Adrenal gland (tissue), 19 donors: ENCODE measurements at regions of chr22 and their contacts with region 1.

Region 1: GRCh38 chr22:42511401-42511891 is 8.2 kb downstream of the RRP7A start:
- DNase-seq: no peak
- H3K4me3 ChIP-seq: no peak overlapping the region
- H3K27ac ChIP-seq: no peak overlapping the region
- H3K4me1 ChIP-seq: peaks cover 0 to 6% of the 10 kb centered on the region in 2 donors
- H3K27me3 ChIP-seq: no peaks in the 10 kb centered on the region
- CTCF ChIP-seq: no peak
- POLR2A ChIP-seq: no peak

Region 2: GRCh38 chr22:42544686-42545085 is 33.2 kb after region 1 on chr22:
- intact Hi-C with region 1: loop called in 1 of 2 experiments (anchors 5 kb)
- DNase-seq: peak in 2 of 7 donors; percentile 31 to 47
- H3K4me3 ChIP-seq: no peak overlapping the region
- H3K27ac ChIP-seq: no peak overlapping the region
- H3K4me1 ChIP-seq: no peaks in the 10 kb centered on the region
- H3K27me3 ChIP-seq: no peaks in the 10 kb centered on the region
- CTCF ChIP-seq: no peak
- POLR2A ChIP-seq: no peak

Region 3: DNA sequence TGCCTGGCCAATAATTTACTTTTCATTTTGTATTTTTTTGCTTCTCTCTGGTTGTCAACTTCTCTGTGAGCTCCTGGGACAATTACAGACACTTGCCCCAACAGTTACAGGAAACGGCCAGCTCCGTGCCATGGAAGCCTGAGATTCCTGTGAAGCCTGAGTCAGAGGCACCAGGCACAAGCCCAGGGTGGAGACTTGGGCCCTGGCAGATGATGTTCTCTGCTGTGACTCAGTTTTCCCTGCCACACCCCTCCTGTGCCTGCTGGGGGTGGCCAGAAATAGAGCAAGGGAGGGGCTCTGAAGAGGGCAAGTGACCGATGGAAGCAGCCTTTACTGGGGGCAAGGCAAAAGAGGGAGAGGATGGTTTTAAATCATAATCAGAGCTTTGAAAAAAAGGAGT is 124.1 kb after region 1 on chr22:
- intact Hi-C with region 1: no loop called
- DNase-seq: peak; percentile 82 to 95 (median 93)
- H3K4me3 ChIP-seq: no peak overlapping the region
- H3K27ac ChIP-seq: peak overlapping the region; percentile 55 to 94 (median 78)
- H3K4me1 ChIP-seq: peaks cover 5 to 29% of the 10 kb centered on the region in 2 donors
- H3K27me3 ChIP-seq: no peaks in the 10 kb centered on the region
- CTCF ChIP-seq: peak in 1 of 6 experiments; percentile 6
- POLR2A ChIP-seq: peak in 1 of 2 donors; percentile 38

Region 4: GRCh38 chr22:42680648-42681047 is 169.2 kb after region 1 on chr22:
- intact Hi-C with region 1: no loop called
- DNase-seq: peak in 5 of 7 donors; percentile 37 to 79 (median 69)
- H3K4me3 ChIP-seq: no peak overlapping the region
- H3K27ac ChIP-seq: peak overlapping the region in 2 of 5 donors; percentile 49 to 77
- H3K4me1 ChIP-seq: peaks cover 0 to 23% of the 10 kb centered on the region in 2 donors
- H3K27me3 ChIP-seq: no peaks in the 10 kb centered on the region
- CTCF ChIP-seq: no peak
- POLR2A ChIP-seq: no peak